Activated CD4-positive, alpha-beta memory T cell treated with anti-CD3 and anti-CD28 coated beads for 36 hours (primary cell): ENCODE measurements at regions of chr5 and their contacts with region 1.

Region 1: DNA sequence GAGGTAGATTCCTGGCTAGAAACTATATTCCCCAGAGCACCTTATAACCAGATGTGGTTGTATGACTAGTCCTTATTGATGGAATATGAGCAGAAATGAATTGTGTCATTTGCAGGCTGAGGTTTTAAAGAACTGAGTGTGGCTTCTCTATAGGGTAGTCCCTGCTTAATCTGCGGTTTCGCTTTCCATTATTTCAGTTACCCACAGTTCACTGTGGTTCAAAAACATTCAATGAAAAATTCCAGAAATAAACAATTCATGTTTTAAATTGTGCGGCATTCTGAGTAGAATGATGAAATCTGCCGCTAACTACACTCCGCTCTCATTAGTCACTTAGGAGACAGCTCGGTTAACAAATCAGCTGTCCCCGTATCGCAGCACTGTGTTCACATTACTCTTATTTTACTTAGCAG is 65.1 kb downstream of the ANKRD55 start:
- DNase-seq: no peak
- H3K4me3 Mint-ChIP-seq: no peak overlapping the region
- H3K27ac Mint-ChIP-seq: peak overlapping the region; percentile 45
- H3K4me1 Mint-ChIP-seq: peaks cover 35% of the 10 kb centered on the region
- H3K27me3 Mint-ChIP-seq: peaks cover 1% of the 10 kb centered on the region

Region 2: GRCh38 chr5:56155992-56156584 is 12.0 kb before region 1 on chr5:
- CTCF ChIA-PET with region 1: interaction called, 3 read pairs
- POLR2A ChIA-PET with region 1: no interaction called
- intact Hi-C with region 1: loop called (anchors 1 kb)
- DNase-seq: no peak
- H3K4me3 Mint-ChIP-seq: peak overlapping the region; percentile 14
- H3K27ac Mint-ChIP-seq: peak overlapping the region; percentile 88
- H3K4me1 Mint-ChIP-seq: peaks cover 73% of the 10 kb centered on the region
- H3K27me3 Mint-ChIP-seq: no peaks in the 10 kb centered on the region